ENCODE measurements at regions of chr21 and their contacts with region 1.

Region 1: DNA sequence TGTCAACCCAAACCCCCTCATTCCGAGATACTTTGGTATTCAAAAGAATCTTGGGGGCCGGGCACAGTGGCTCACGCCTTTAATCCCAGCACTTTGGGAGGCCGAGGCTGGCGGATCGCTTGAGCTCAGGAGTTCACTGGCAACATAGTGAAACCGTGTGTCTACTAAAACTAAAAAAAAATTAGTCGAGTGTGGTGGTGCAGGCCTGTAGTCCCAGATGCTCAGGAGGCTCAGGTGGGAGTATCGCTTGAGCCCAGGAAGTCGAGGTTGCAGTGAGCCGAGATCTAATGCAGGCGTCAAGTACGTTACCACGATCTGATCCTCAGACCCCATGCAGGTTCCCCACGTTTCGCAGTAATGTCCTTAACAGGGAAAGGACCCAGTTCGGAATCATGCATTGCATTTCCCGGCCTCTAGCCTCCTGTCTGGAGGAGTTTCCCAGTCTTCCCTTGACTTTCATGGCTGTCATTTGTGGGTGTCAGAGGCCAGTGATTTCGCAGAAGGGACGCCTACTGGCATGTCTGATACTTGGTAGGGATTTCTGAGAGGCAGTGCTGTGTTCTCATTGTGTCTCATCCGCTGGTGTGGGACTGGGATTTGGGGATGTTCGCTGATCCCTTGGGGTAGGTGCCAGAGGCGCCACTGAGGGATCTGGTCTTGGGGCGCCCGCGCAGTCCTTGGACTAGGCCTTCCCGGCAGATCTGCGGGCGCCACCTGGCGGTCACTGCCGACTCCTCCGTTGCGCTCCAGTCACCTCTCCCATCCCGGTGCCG is 39.3 kb upstream of the HMGN1 start:
- DNase-seq: peak; percentile 94
- H3K4me3 ChIP-seq: peak overlapping the region; percentile 3 to 48 (median 35)
- H3K27ac ChIP-seq: peak overlapping the region; percentile 77 to 84 (median 81)
- H3K4me1 ChIP-seq: peaks cover 0 to 27% (median 21%) of the 10 kb centered on the region in 4 donors
- H3K27me3 ChIP-seq: no peaks in the 10 kb centered on the region
- CTCF ChIP-seq: peak; percentile 88 to 96 (median 92)
- EP300 ChIP-seq: no peak
- POLR2A ChIP-seq: no peak

Region 2: GRCh38 chr21:39183237-39184007 is 204.8 kb before region 1 on chr21 and contains the start of gene PSMG1:
- in situ Hi-C with region 1: loop called in 1 of 4 experiments (anchors 25 kb)
- intact Hi-C with region 1: no loop called
- DNase-seq: peak; percentile 97
- H3K4me3 ChIP-seq: peak within 1 kb of the TSS; percentile 75 to 92 (median 80)
- H3K27ac ChIP-seq: peak within 1 kb of the TSS; percentile 91 to 95 (median 92)
- H3K4me1 ChIP-seq: peaks cover 6 to 35% (median 22%) of the 10 kb centered on the region in 4 donors
- H3K27me3 ChIP-seq: no peaks in the 10 kb centered on the region
- CTCF ChIP-seq: no peak
- EP300 ChIP-seq: no peak
- POLR2A ChIP-seq: peak; percentile 83
- total RNA-seq, gene PSMG1: 7.4 to 28.1 (median 20.2) TPM

Region 3: DNA sequence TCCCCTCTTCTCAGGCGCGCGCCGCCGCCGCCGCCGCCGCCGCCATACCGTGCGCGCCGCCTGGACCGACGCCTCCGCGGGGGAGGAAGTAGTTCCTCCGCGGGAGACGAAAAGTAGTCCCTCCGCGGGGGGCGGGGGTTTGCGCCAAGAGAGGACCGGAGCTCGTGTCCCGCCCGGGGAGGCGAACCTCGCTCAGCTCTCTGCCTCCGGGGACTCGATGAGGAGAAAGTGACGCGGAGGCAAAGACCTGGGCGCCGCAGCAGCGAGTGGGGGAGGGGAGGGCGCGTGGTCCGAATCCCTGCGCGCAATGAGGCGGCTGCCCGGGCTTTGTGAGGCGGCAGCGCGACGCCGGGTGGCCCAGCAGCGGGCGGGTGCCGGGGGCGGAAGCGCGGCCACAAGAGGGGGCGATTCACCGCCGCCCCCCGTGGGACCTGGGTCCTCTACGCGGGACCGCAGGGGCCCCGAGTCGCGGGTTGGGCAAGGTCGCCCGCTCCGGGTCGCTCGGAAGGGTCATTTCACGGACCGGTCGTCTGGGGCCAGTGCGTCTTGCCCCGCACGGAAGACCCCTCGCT is 74.6 kb before region 1 on chr21 and contains the start of gene BRWD1:
- in situ Hi-C with region 1: loop called in 1 of 4 experiments (anchors 10 kb)
- intact Hi-C with region 1: loop called (anchors 1 kb)
- DNase-seq: peak; percentile 80
- H3K4me3 ChIP-seq: peak within 1 kb of the TSS; percentile 59 to 98 (median 67)
- H3K27ac ChIP-seq: peak within 1 kb of the TSS; percentile 94 to 98 (median 95)
- H3K4me1 ChIP-seq: peaks cover 6 to 29% (median 19%) of the 10 kb centered on the region in 4 donors
- H3K27me3 ChIP-seq: no peaks in the 10 kb centered on the region
- CTCF ChIP-seq: peak in 3 of 5 experiments; percentile 19 to 51 (median 24)
- EP300 ChIP-seq: peak; percentile 37
- POLR2A ChIP-seq: peak; percentile 86
- total RNA-seq, gene BRWD1: 63.8 to 281 (median 103) TPM

Region 4: GRCh38 chr21:39349211-39350093 is 38.8 kb before region 1 on chr21:
- in situ Hi-C with region 1: no loop called
- intact Hi-C with region 1: loop called (anchors 5 kb)
- DNase-seq: peak; percentile 98
- H3K4me3 ChIP-seq: peak overlapping the region; percentile 46 to 87 (median 66)
- H3K27ac ChIP-seq: peak overlapping the region; percentile 94 to 98 (median 96)
- H3K4me1 ChIP-seq: peaks cover 12 to 37% (median 25%) of the 10 kb centered on the region in 4 donors
- H3K27me3 ChIP-seq: no peaks in the 10 kb centered on the region
- CTCF ChIP-seq: no peak
- EP300 ChIP-seq: no peak
- POLR2A ChIP-seq: peak; percentile 77

Region 5: DNA sequence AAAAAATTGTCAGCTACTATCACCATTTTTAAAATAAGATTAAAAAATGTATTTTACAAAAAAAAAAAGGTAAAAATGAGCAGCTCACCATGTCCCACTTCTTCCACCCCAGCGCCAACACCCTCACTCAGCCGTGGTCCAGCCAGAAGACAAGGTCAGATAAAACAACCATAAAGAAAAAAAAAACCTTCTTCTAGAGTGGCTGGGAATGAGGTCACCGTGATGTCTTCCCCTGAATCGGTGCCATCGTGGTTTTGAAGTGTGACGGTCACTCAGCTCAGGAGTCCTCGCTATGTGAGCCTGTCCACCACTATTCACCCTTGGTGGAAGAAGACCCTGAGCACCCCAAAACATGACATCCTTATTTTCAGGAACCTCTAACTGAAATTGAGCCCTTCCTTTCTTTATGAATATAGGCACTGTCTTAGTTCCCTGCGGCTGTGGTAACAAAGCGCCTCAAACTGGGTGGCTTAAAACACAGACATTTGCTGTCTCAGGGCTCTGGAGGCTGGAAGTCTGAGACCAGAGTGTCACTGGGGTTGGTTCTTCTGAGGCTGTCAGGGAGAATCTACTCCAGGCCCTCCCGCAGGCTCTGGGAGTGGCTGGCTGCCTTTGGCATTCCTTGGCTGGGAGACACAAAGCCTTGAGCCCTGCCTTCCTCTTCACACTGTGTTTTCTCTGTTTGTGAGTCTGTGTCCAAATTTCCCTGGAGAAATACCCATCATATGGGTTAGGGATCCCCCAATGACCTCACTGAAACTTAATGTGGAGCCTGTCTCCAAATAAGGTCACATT is 262.8 kb after region 1 on chr21:
- in situ Hi-C with region 1: no loop called
- intact Hi-C with region 1: no loop called
- DNase-seq: no peak
- H3K4me3 ChIP-seq: no peak overlapping the region
- H3K27ac ChIP-seq: no peak overlapping the region
- H3K4me1 ChIP-seq: peaks cover 0 to 28% (median 9%) of the 10 kb centered on the region in 4 donors
- H3K27me3 ChIP-seq: no peaks in the 10 kb centered on the region
- CTCF ChIP-seq: no peak
- EP300 ChIP-seq: no peak
- POLR2A ChIP-seq: no peak

Measured in transverse colon (tissue), 4 donors.